GM18951 (cell line): ENCODE measurements at regions of chr5 and their contacts with region 1.

Region 1: DNA sequence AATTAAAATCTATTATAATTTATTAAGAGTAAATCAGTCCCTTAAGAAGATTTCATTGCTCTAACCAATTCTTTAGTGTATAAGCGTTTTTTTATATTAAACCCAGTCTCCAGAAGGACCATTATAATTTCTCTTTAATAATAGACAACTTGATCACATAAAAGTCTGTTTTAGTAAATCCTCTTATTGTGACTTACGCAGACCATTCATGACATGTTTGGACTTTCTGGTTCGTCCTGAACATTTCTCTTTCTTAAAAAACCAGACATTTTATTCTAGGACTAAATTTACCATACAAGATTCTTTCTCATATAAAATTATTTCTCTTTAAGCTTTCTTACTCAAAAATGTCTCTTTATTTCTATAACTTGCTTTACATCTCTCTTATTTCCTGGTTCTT is 196.2 kb upstream of the RAI14 start:
- POLR2A ChIP-seq: no peak

Region 2: GRCh38 chr5:33997331-33997983 is 462.5 kb before region 1 on chr5:
- in situ Hi-C with region 1: loop called (anchors 10 kb)
- POLR2A ChIP-seq: no peak

Region 3: DNA sequence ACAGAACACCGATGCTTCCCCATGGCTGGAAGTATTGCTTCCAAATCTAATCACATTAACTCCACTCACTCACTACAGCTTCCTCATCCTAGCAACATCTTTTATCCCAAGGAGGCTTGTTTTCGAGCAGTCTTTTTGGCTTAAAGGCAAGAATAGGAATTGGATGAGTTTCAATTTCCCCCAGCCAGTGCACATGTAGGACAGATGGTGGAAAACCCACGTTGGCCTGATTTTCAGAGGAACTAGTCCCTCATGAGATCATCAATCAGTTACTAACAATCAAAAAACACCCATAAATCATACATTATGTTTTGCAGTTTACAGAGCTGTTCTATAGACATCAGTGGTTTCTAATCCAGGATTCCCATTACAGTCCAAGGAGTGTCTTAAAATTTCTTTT is 636.3 kb after region 1 on chr5:
- in situ Hi-C with region 1: no loop called
- POLR2A ChIP-seq: no peak